ENCODE measurements at regions of chr11 and their contacts with region 1.

Region 1: DNA sequence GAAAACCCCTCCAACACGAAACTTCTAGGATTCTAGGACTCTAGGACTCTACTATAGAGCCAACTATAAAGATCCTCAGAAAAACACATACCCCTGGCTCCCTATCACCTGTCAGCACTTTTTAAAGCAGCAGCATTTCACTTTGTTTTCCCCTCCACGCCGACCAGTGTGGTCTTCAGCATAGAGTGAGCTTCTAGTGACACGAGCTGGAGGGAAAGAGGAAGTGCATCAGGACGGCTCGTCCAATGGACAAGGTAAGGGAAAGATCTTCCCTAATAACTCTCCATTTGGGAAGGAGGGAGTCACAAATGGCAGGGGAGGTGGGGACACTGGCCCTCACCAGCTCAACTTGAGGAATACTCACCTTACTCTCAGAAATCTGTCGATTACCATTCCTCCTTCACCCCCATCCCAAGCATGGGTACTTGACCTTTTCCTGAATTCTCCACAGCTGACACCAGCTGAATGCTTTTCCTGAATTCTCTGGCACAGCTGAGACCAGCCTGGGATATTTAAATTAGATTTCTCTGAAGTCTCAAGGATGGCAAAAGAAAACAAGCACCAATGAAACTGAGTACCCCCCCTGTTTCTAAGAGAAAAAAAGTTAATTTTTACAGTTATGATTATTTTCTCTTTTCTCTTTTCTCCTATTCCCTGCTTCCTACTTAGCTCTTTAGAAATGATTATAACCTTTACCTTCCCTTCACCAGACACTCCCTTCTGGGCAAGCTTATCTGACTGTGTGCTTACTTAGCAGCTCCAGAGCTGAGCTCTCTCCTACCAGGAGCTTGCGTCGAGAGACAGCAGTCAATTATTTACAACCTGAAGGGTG is 33.3 kb upstream of the NNMT start:
- DNase-seq: peak in 3 of 9 experiments; percentile 30 to 55 (median 42)
- ATAC-seq: peak; percentile 65
- H3K4me3 ChIP-seq: no peak overlapping the region
- H3K4me3 Mint-ChIP-seq: no peak overlapping the region
- H3K27ac ChIP-seq: no peak overlapping the region
- H3K27ac Mint-ChIP-seq: no peak overlapping the region
- H3K4me1 ChIP-seq: no peaks in the 10 kb centered on the region
- H3K4me1 Mint-ChIP-seq: peaks cover 4% of the 10 kb centered on the region
- H3K27me3 ChIP-seq: no peaks in the 10 kb centered on the region
- H3K27me3 Mint-ChIP-seq: no peaks in the 10 kb centered on the region
- CTCF ChIP-seq: peak; percentile 42

Region 2: DNA sequence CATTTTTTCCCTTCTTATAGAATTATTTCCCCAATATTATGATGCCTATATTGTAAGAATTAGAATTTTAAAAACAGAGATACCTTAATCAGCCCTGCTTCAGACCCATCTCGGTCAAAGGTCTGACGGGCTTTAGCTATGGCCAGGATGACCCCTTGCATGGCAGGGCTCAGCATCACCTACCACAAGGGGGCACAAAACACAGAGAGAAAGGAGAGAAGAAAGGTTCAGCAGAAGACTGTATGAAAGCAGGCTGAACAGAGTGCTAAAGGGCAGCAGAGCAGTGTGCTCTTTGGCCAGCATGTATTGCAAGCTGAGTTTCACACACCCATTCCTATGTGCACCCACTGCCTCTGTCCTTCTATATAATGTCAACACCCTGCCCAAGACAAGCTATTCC is 456.5 kb before region 1 on chr11:
- CTCF ChIA-PET with region 1: interaction called, 7 read pairs
- POLR2A ChIA-PET with region 1: no interaction called
- intact Hi-C with region 1: loop called (anchors 5 kb)
- DNase-seq: peak in 2 of 9 experiments; percentile 14 to 22
- ATAC-seq: no peak
- H3K4me3 ChIP-seq: no peak overlapping the region
- H3K4me3 Mint-ChIP-seq: no peak overlapping the region
- H3K27ac ChIP-seq: no peak overlapping the region
- H3K27ac Mint-ChIP-seq: no peak overlapping the region
- H3K4me1 ChIP-seq: no peaks in the 10 kb centered on the region
- H3K4me1 Mint-ChIP-seq: no peaks in the 10 kb centered on the region
- H3K27me3 ChIP-seq: no peaks in the 10 kb centered on the region
- H3K27me3 Mint-ChIP-seq: no peaks in the 10 kb centered on the region
- CTCF ChIP-seq: no peak

Region 3: GRCh38 chr11:114036156-114036811 is 226.6 kb before region 1 on chr11:
- CTCF ChIA-PET with region 1: interaction called, 316 read pairs
- POLR2A ChIA-PET with region 1: interaction called, 4 read pairs
- intact Hi-C with region 1: loop called (anchors 1 kb)
- DNase-seq: peak; percentile 7 to 80 (median 56)
- ATAC-seq: peak; percentile 54
- H3K4me3 ChIP-seq: no peak overlapping the region
- H3K4me3 Mint-ChIP-seq: no peak overlapping the region
- H3K27ac ChIP-seq: no peak overlapping the region
- H3K27ac Mint-ChIP-seq: no peak overlapping the region
- H3K4me1 ChIP-seq: peaks cover 9% of the 10 kb centered on the region
- H3K4me1 Mint-ChIP-seq: peaks cover 3% of the 10 kb centered on the region
- H3K27me3 ChIP-seq: peaks cover 0 to 3% of the 10 kb centered on the region in 2 experiments
- H3K27me3 Mint-ChIP-seq: peaks cover 7% of the 10 kb centered on the region
- CTCF ChIP-seq: peak; percentile 59

Region 4: DNA sequence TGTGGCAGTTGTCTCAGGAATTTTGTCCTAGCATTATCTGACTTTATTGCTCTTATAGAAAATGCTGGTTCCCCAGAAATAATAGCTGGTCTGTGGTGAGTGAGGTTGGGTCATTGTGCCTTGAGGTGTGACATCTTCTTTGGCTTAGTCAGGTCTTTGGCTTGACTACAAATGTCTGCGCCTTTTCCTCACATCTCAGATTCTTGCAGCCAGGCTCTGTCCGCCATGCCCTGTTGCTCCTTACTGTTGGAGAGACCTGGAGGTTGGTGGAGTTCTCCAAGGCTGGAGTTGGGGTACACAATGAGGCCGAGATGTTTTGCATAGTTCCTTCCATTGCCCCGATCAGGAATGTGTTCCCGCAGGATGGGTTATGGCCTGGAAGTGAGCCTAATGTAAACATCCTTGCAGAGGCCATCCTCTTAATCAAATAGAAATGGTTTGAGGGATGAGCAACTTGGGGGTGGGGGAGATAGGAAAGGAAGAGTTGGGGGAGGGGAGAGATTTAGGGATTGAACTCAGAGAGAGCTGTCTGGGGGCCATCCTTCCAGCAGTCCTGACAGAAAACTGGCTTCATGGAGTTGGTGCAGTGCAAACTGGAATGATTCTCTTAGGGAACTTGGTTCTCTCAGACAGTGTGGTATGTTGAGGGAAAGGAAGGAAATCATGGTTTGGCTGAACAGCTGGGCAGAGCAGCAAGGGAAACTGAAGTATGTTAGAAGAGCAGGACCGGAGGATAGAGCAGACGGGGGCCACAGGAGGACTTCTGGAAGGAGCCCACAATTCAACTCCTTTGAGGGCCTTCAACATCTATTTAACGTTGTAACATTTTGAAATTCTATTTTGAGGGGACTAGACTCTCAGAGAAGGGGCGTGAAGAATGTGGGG is 153.4 kb before region 1 on chr11:
- CTCF ChIA-PET with region 1: interaction called, 11 read pairs
- POLR2A ChIA-PET with region 1: no interaction called
- intact Hi-C with region 1: no loop called
- DNase-seq: no peak
- ATAC-seq: no peak
- H3K4me3 ChIP-seq: no peak overlapping the region
- H3K4me3 Mint-ChIP-seq: peak overlapping the region; percentile 36
- H3K27ac ChIP-seq: no peak overlapping the region
- H3K27ac Mint-ChIP-seq: peak overlapping the region; percentile 41
- H3K4me1 ChIP-seq: peaks cover 11% of the 10 kb centered on the region
- H3K4me1 Mint-ChIP-seq: peaks cover 28% of the 10 kb centered on the region
- H3K27me3 ChIP-seq: peaks cover 0 to 4% of the 10 kb centered on the region in 2 experiments
- H3K27me3 Mint-ChIP-seq: peaks cover 12% of the 10 kb centered on the region
- CTCF ChIP-seq: no peak

Region 5: GRCh38 chr11:114159802-114160632 is 102.9 kb before region 1 on chr11:
- CTCF ChIA-PET with region 1: interaction called, 40 read pairs
- POLR2A ChIA-PET with region 1: interaction called, 7 read pairs
- intact Hi-C with region 1: loop called (anchors 2 kb)
- DNase-seq: peak; percentile 96 to 100 (median 98)
- ATAC-seq: peak; percentile 95
- H3K4me3 ChIP-seq: peak overlapping the region in 1 of 2 experiments; percentile 2
- H3K4me3 Mint-ChIP-seq: peak overlapping the region; percentile 68
- H3K27ac ChIP-seq: peak overlapping the region; percentile 25 to 51
- H3K27ac Mint-ChIP-seq: peak overlapping the region; percentile 94
- H3K4me1 ChIP-seq: peaks cover 65% of the 10 kb centered on the region
- H3K4me1 Mint-ChIP-seq: peaks cover 87% of the 10 kb centered on the region
- H3K27me3 ChIP-seq: no peaks in the 10 kb centered on the region
- H3K27me3 Mint-ChIP-seq: no peaks in the 10 kb centered on the region
- CTCF ChIP-seq: no peak

Region 6: GRCh38 chr11:114197799-114198500 is 64.9 kb before region 1 on chr11:
- CTCF ChIA-PET with region 1: interaction called, 95 read pairs
- POLR2A ChIA-PET with region 1: interaction called, 3 read pairs
- intact Hi-C with region 1: loop called in 1 of 2 experiments (anchors 5 kb)
- DNase-seq: no peak
- ATAC-seq: no peak
- H3K4me3 ChIP-seq: no peak overlapping the region
- H3K4me3 Mint-ChIP-seq: no peak overlapping the region
- H3K27ac ChIP-seq: no peak overlapping the region
- H3K27ac Mint-ChIP-seq: peak overlapping the region; percentile 22
- H3K4me1 ChIP-seq: no peaks in the 10 kb centered on the region
- H3K4me1 Mint-ChIP-seq: peaks cover 24% of the 10 kb centered on the region
- H3K27me3 ChIP-seq: no peaks in the 10 kb centered on the region
- H3K27me3 Mint-ChIP-seq: no peaks in the 10 kb centered on the region
- CTCF ChIP-seq: no peak